Heart right ventricle (tissue), 16 donors: ENCODE measurements at regions of chr11 and their contacts with region 1.

Region 1: DNA sequence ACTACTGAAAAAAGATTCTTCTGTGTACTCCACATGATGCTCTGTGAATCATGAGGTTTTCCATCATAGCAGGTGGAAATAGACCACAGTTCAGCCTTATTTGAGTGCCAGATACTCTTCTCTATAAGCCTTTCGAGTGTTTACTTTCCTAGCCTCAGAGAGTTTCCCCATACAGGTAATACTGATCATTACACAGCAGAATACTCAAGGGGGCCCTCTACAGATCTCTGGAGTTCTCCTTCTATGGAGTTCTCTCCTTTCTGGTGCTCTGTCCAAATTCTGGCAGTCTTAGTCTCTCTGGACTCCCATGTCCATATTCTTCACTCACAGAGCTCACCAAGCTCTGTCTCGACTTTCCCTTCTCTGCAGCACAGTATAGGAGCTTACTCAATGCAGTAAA is 175.7 kb upstream of the CARD18 start:
- DNase-seq: no peak
- ATAC-seq: no peak
- H3K4me3 ChIP-seq: no peak overlapping the region
- H3K27ac ChIP-seq: no peak overlapping the region
- H3K4me1 ChIP-seq: no peaks in the 10 kb centered on the region
- H3K27me3 ChIP-seq: no peaks in the 10 kb centered on the region
- CTCF ChIP-seq: no peak

Region 2: DNA sequence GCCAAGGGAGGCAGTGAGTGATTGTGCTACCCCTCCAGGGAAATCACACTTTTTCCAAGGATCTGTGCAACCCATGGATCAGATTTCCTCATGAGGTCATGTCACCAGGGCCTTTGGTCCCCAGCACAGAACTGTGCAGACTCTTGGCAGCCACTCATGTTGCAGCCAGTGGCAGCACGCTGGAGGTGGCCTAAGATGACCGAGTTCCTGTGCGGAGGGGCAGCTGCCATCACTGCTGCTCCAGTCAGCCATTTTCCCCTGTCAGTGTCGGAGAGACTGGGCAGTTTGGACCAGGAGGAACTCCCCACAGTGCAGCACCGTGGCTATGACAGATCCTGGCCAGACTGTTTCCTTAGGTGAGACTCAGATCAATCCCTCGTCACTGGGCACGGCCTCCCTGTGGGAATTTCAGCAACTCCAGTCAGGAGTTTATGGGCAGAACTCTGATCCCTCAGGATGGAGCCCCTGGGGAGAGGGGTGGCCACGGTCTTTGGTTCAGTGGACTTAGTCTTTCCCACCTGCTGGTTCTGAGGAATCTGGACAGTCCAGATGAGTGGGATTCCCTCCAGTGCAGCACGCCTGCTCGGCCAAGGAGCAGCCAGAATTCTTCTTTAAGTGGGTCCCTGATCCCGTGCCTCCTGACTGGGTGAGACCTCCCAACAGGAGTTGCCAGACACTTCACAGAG is 18.9 kb after region 1 on chr11:
- intact Hi-C with region 1: loop called in 1 of 10 experiments (anchors 2 kb)
- DNase-seq: no peak
- ATAC-seq: no peak
- H3K4me3 ChIP-seq: no peak overlapping the region
- H3K27ac ChIP-seq: no peak overlapping the region
- H3K4me1 ChIP-seq: no peaks in the 10 kb centered on the region
- H3K27me3 ChIP-seq: no peaks in the 10 kb centered on the region
- CTCF ChIP-seq: no peak